GM18951 (cell line): ENCODE measurements at regions of chr9 and their contacts with region 1.

Region 1: GRCh38 chr9:1599961-1600360 is 415.2 kb upstream of the SMARCA2 start:
- POLR2A ChIP-seq: no peak

Region 2: GRCh38 chr9:1354086-1354485 is 245.9 kb before region 1 on chr9:
- in situ Hi-C with region 1: no loop called
- POLR2A ChIP-seq: no peak

Region 3: GRCh38 chr9:1454616-1455347 is 145.2 kb before region 1 on chr9:
- in situ Hi-C with region 1: loop called (anchors 5 kb)
- POLR2A ChIP-seq: no peak